ENCODE measurements at regions of chr18 and their contacts with region 1.

Region 1: DNA sequence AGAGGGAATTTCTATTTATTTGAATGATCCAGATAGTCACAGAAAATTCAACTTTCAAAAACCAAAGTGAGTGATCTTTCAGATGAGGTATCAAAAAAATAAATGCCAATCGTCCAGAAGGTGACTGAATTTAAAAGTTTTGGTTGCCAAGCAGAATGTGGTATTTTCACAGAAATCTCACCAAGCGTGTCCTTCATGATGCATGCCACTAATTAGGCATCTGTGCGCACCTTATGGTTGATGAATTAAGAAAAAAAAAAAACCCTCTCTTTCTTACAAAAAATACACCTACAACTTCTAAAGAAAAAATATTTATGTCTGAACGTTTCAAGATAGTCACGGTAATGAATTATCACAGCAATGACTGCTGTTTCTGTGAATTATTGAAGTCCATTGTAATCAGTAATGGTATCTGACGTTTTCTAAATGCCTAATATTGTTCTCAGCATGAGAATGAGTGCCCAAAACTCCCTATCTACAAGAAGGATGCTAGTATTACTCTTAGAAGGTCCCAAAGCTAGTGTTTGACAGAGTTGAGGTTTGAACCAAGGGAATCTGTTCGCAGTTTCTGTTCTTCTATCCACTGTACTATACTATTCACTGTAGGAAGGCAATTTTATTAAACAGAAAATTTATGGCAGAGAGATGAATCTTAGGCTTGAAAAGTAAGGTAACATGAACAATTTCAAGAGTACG is 219.6 kb upstream of the NETO1 start:
- DNase-seq: no peak
- ATAC-seq: no peak
- H3K4me3 ChIP-seq: no peak overlapping the region
- H3K27ac ChIP-seq: no peak overlapping the region
- H3K4me1 ChIP-seq: no peaks in the 10 kb centered on the region
- H3K27me3 ChIP-seq: no peaks in the 10 kb centered on the region
- CTCF ChIP-seq: no peak

Region 2: DNA sequence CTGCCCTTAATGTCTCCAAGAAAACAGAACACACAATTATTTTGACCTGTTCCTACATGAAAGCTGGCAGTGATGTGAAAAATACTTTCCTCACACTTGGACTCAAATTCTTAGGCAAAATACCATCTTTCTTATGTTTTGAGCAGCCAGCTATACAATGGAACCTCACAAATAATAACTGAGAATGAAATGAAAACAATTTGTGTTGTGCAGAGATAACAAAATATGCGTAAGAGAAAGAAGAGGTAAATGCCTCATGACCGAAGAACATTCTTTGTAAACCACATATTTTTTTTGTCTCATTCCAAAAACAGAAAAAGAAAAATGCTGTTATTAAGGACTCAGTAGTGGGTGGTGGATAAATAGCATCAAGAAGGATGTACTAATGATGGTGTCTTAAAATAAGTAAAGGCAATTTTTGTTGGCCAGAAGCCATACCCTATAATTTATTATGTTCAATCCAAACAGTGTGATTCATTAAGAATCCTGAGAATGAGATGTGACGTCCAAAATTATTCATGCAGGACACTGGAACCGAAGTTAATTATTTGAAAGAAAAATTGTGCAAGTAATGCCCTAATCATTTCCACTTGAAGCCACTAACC is 26.7 kb before region 1 on chr18:
- intact Hi-C with region 1: loop called in 1 of 2 experiments (anchors 2 kb)
- DNase-seq: no peak
- ATAC-seq: no peak
- H3K4me3 ChIP-seq: no peak overlapping the region
- H3K27ac ChIP-seq: no peak overlapping the region
- H3K4me1 ChIP-seq: no peaks in the 10 kb centered on the region
- H3K27me3 ChIP-seq: no peaks in the 10 kb centered on the region
- CTCF ChIP-seq: no peak

Measured in psoas muscle (tissue), 8 donors.